Gastrocnemius medialis (tissue), 4 donors: ENCODE measurements at regions of chr1 and their contacts with region 1.

Region 1: DNA sequence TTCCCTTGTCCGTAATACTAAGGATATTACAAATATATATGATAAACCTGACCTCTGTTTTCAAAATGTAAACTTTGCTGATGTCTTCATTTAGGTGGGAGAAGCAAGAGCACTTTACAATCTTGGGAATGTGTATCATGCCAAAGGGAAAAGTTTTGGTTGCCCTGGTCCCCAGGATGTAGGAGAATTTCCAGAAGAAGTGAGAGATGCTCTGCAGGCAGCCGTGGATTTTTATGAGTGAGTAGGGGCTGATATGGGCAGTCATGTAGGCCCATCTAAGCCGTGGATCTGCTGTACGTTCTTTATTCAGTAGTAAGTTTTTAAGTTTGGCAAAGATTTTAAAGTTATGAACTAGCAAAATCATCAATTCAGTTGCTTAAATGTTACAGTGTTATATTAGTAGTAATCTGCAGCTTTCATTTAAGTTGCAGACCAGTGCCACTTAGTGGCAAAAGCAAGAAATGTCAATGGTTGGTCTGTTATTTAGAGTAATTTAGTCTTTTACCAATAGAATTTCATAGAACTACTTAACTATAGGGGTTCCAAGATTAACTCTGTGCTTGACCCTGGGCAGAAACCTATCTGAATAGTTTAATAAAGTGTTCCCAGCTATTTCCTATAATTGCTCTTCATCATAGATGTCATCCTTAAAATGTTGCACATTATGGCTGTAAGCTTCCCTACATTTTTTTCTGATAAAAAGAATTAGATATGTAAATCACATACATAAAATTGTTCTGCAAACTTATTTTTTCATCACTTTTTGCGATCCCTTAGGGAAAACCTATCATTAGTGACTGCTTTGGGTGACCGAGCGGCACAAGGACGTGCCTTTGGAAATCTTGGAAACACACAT is 21.3 kb downstream of the GPSM2 start:
- DNase-seq: no peak
- ATAC-seq: peak; percentile 70
- H3K4me3 ChIP-seq: no peak overlapping the region
- H3K27ac ChIP-seq: peak overlapping the region in 1 of 4 donors; percentile 62
- H3K4me1 ChIP-seq: peaks cover 5 to 8% of the 10 kb centered on the region in 2 donors
- H3K27me3 ChIP-seq: no peaks in the 10 kb centered on the region
- CTCF ChIP-seq: peak; percentile 48 to 87 (median 74)
- POLR2A ChIP-seq: no peak

Region 2: GRCh38 chr1:108708691-108709660 is 189.1 kb before region 1 on chr1:
- in situ Hi-C with region 1: no loop called
- intact Hi-C with region 1: no loop called
- DNase-seq: no peak
- ATAC-seq: no peak
- H3K4me3 ChIP-seq: no peak overlapping the region
- H3K27ac ChIP-seq: no peak overlapping the region
- H3K4me1 ChIP-seq: no peaks in the 10 kb centered on the region
- H3K27me3 ChIP-seq: peaks cover 0 to 3% (median 0%) of the 10 kb centered on the region in 3 donors
- CTCF ChIP-seq: peak in 1 of 5 experiments; percentile 12
- POLR2A ChIP-seq: no peak

Region 3: DNA sequence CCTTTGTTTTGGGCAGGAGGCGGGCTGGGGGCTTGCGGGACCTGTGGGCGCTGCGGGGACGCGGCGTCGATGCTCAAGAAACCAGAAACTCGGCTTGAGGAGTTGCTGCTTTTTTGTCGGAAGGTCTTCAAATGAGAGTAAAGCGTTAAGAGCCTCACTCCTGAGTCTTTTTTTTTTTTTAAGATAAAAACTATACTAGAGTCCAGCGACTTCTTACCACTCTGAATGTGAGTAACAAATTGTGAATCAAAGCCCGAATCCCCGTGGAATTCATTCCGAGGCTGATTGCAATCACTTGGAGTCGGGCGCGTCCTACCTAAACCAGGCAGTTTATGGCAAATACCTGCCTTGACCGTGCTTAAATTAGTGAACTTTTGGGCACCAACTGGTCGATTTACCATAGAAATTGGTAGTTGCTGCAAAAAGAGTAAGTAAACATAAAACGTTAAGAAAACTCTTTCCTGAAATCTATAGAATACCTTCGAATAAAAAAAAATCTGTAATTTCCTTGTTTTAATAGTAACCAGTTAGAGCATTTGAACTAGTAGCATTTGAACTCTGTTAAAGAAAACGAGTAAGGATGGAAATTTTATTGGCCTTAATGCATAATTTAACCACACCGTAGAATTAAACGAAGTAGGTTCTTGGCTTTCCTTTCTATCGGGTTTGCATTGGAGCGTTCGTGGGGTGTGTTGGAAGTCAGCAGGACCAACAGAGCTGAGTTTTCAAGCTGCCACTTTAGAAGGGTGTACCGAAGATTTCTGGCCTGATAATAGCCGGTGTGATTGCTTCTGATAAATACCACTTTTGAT is 20.5 kb before region 1 on chr1:
- in situ Hi-C with region 1: no loop called
- intact Hi-C with region 1: loop called (anchors 2 kb)
- DNase-seq: no peak
- ATAC-seq: peak; percentile 3 to 27
- H3K4me3 ChIP-seq: peak overlapping the region; percentile 79 to 96 (median 84)
- H3K27ac ChIP-seq: peak overlapping the region; percentile 73 to 81 (median 77)
- H3K4me1 ChIP-seq: peaks cover 5 to 9% of the 10 kb centered on the region in 2 donors
- H3K27me3 ChIP-seq: no peaks in the 10 kb centered on the region
- CTCF ChIP-seq: no peak
- POLR2A ChIP-seq: no peak